ENCODE measurements at regions of chr9 and their contacts with region 1.

Region 1: GRCh38 chr9:137233143-137233980 is 2.7 kb downstream of the SLC34A3 start:
- DNase-seq: no peak
- ATAC-seq: no peak
- H3K4me3 ChIP-seq: no peak overlapping the region
- H3K27ac ChIP-seq: no peak overlapping the region
- H3K4me1 ChIP-seq: peaks cover 29% of the 10 kb centered on the region
- H3K27me3 ChIP-seq: peaks cover 0 to 26% of the 10 kb centered on the region in 2 donors
- CTCF ChIP-seq: no peak
- POLR2A ChIP-seq: no peak

Region 2: DNA sequence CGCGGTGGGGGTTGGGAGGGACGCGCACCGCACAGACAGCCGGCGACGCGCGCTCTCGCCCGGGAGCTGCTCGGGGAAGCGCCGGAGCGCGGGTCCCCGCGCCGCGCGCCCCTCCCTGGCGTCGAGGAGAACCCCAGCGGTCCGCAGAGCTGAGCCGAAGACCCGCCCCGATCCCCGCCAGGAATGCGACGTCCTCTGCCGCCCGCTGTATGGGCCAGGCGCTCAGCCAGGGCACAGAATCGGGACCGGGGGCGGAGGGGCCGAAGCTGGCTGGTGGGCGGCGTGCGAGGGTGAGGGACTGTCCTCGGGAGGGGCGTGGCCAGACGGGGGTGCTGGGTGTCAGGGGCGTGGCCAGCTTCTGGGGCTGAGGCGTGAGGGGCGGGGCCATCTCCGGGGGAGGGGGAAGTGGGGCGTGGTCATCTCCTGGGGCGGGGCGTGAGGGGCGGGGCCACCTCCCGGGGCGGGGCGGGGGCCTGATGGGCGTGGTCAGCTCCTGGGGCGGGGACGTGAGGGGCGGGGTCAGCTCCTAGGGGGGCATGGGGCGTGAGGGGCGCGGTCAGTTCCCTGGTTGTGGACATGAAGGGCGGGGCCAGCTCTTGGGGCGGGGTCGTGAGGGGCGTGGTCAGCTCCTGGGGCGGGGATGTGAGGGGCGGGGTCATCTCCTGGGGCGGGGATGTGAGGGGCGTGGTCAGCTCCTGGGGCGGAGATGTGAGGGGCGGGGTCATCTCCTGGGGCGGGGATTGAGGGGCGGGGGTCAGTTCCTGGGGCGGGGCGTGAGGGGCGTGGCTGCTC is 255.1 kb before region 1 on chr9:
- intact Hi-C with region 1: no loop called
- DNase-seq: peak; percentile 56 to 68 (median 62)
- ATAC-seq: peak; percentile 46
- H3K4me3 ChIP-seq: no peak overlapping the region
- H3K27ac ChIP-seq: peak overlapping the region in 1 of 4 donors; percentile 38
- H3K4me1 ChIP-seq: peaks cover 6% of the 10 kb centered on the region
- H3K27me3 ChIP-seq: no peaks in the 10 kb centered on the region
- CTCF ChIP-seq: no peak
- POLR2A ChIP-seq: no peak

Region 3: GRCh38 chr9:137114610-137115391 is 118.6 kb before region 1 on chr9 and contains the start of gene DPP7:
- intact Hi-C with region 1: loop called (anchors 5 kb)
- DNase-seq: peak; percentile 68 to 81 (median 74)
- ATAC-seq: peak; percentile 86
- H3K4me3 ChIP-seq: peak within 1 kb of the TSS; percentile 51 to 55
- H3K27ac ChIP-seq: peak within 1 kb of the TSS in 2 of 4 donors; percentile 1 to 34
- H3K4me1 ChIP-seq: peaks cover 17% of the 10 kb centered on the region
- H3K27me3 ChIP-seq: no peaks in the 10 kb centered on the region
- CTCF ChIP-seq: no peak
- POLR2A ChIP-seq: peak in 2 of 3 donors; percentile 22 to 40
- total RNA-seq, gene DPP7: 137 to 171 TPM

Region 4: DNA sequence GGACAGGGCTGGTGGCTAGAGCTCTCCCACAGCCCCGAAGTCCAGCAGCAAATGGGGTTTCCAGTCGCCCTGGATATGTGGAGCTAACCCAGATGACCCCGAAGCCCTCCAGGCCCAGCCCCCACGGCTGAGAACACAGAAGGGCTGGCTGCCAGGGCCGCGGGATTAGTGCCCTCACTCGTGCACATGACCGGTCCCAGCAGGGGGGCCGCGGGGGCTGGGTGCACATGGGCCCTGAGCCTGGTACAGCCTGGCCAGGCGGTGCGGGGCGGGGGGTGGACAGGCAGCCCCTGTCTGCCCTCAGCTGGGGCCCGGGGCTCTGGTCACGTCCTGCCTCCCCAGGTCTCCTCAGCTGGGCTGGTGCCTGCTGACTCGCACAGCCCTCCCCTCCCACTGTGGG is 39.0 kb before region 1 on chr9:
- intact Hi-C with region 1: loop called (anchors 5 kb)
- DNase-seq: peak; percentile 85 to 94 (median 90)
- ATAC-seq: peak; percentile 41
- H3K4me3 ChIP-seq: no peak overlapping the region
- H3K27ac ChIP-seq: peak overlapping the region; percentile 92 to 99 (median 92)
- H3K4me1 ChIP-seq: peaks cover 100% of the 10 kb centered on the region
- H3K27me3 ChIP-seq: no peaks in the 10 kb centered on the region
- CTCF ChIP-seq: no peak
- POLR2A ChIP-seq: no peak